Activated naive CD4-positive, alpha-beta T cell treated with anti-CD3 and anti-CD28 coated beads for 36 hours (primary cell): ENCODE measurements at regions of chr6 and their contacts with region 1.

Region 1: GRCh38 chr6:116847227-116847626 is 18.3 kb upstream of the GPRC6A start:
- DNase-seq: no peak
- H3K4me3 Mint-ChIP-seq: no peak overlapping the region
- H3K27ac Mint-ChIP-seq: no peak overlapping the region
- H3K4me1 Mint-ChIP-seq: no peaks in the 10 kb centered on the region
- H3K27me3 Mint-ChIP-seq: peaks cover 7% of the 10 kb centered on the region

Region 2: DNA sequence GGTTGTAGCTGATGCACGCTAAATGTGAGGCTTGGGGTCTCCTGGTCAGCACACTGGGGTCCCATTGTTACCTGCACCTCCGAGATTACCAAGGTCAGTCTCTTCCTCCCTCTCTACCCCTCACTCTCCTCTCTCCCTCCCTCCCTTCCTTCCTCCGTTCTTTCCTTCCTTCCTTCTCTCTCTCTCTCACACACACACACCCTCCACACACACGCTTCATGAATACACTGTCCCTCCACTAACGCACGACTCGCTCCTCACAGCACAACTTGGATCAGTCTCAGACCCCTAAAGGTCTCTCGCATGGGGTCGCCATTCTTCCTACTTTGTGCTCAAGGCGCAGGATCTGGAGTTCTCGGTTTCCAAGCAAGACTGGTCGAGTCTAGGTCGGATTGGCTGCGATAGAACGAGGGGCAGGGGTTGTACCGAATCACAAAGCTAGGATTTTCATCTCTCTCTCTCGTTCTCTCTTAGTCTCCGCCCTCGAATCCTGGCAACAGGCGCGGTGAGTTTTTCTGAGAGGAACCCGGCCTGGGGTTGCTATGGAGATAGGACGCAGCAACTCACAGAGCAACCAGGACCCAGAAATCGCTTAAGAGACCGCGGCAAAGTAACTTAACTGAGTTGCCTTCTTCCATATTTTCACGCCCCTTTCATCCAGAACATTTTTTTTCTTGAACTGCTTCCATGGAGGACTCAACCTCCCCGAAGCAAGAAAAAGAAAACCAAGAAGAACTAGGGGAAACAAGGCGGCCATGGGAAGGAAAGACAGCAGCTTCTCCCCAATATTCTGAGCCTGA is 231.1 kb before region 1 on chr6 and contains the start of gene RSPH4A:
- CTCF ChIA-PET with region 1: no interaction called
- intact Hi-C with region 1: loop called (anchors 5 kb)
- DNase-seq: peak; percentile 85
- H3K4me3 Mint-ChIP-seq: peak within 1 kb of the TSS; percentile 82
- H3K27ac Mint-ChIP-seq: no peak within 1 kb of the TSS
- H3K4me1 Mint-ChIP-seq: peaks cover 12% of the 10 kb centered on the region
- H3K27me3 Mint-ChIP-seq: peaks cover 11% of the 10 kb centered on the region
- total RNA-seq, gene RSPH4A: not detected

Region 3: DNA sequence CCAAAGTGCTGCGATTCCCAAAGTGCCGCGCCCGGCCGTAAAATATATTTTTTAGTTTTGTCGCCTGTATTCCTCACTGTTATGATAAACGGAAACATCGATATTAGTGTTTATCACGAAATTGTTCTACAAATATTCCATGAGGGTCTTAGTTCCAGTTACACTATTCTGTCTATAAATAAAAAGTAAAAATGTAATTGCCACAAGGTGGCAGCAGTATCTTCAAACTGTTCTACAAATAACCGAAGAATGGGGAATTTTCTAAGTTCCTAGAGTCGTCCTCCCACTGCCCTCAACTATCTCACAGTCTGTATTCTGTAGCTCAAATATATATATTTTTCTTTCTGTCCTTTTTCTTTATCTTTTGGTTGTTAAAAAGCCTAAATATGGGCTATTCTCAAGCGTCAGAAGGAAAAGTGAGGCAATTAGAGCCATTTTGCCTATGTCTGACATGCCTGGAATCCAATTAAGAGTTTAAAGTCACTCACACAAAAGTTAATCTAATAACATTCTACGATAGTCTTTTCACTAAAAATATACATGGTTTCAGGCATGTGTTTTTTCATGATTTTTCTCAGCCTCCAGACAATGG is 67.6 kb before region 1 on chr6:
- CTCF ChIA-PET with region 1: interaction called, 3 read pairs
- intact Hi-C with region 1: loop called (anchors 1 kb)
- DNase-seq: no peak
- H3K4me3 Mint-ChIP-seq: no peak overlapping the region
- H3K27ac Mint-ChIP-seq: no peak overlapping the region
- H3K4me1 Mint-ChIP-seq: no peaks in the 10 kb centered on the region
- H3K27me3 Mint-ChIP-seq: peaks cover 9% of the 10 kb centered on the region